Mammary epithelial cell (primary cell): ENCODE measurements at regions of chr11 and their contacts with region 1.

Region 1: GRCh38 chr11:126211235-126212088 is at the starts of genes FAM118B and RPUSD4:
- DNase-seq: peak; percentile 95
- H3K4me3 ChIP-seq: peak within 1 kb of the TSS; percentile 87 to 100 (median 99)
- H3K27ac ChIP-seq: peak within 1 kb of the TSS; percentile 79
- H3K4me1 ChIP-seq: peaks cover 10% of the 10 kb centered on the region
- H3K27me3 ChIP-seq: no peaks in the 10 kb centered on the region
- CTCF ChIP-seq: no peak
- total RNA-seq, gene FAM118B: 16.0 to 27.7 TPM
- total RNA-seq, gene RPUSD4: 20.5 to 26.6 TPM

Region 2: GRCh38 chr11:126480410-126481302 is 269.2 kb after region 1 on chr11:
- CTCF ChIA-PET with region 1: no interaction called
- dilution Hi-C with region 1: no loop called
- in situ Hi-C with region 1: no loop called
- intact Hi-C with region 1: loop called (anchors 5 kb)
- DNase-seq: peak; percentile 70
- H3K4me3 ChIP-seq: no peak overlapping the region
- H3K27ac ChIP-seq: no peak overlapping the region
- H3K4me1 ChIP-seq: peaks cover 4% of the 10 kb centered on the region
- H3K27me3 ChIP-seq: no peaks in the 10 kb centered on the region
- CTCF ChIP-seq: peak; percentile 94 to 97